MCF 10A (cell line): ENCODE measurements at regions of chr12 and their contacts with region 1.

Region 1: GRCh38 chr12:17642340-17642650 is 447.7 kb downstream of the RERGL start:
- DNase-seq: no peak
- H3K4me3 Mint-ChIP-seq: peak overlapping the region; percentile 44
- H3K27ac Mint-ChIP-seq: no peak overlapping the region
- H3K4me1 Mint-ChIP-seq: no peaks in the 10 kb centered on the region
- H3K27me3 Mint-ChIP-seq: peaks cover 44% of the 10 kb centered on the region
- CTCF ChIP-seq: no peak

Region 2: DNA sequence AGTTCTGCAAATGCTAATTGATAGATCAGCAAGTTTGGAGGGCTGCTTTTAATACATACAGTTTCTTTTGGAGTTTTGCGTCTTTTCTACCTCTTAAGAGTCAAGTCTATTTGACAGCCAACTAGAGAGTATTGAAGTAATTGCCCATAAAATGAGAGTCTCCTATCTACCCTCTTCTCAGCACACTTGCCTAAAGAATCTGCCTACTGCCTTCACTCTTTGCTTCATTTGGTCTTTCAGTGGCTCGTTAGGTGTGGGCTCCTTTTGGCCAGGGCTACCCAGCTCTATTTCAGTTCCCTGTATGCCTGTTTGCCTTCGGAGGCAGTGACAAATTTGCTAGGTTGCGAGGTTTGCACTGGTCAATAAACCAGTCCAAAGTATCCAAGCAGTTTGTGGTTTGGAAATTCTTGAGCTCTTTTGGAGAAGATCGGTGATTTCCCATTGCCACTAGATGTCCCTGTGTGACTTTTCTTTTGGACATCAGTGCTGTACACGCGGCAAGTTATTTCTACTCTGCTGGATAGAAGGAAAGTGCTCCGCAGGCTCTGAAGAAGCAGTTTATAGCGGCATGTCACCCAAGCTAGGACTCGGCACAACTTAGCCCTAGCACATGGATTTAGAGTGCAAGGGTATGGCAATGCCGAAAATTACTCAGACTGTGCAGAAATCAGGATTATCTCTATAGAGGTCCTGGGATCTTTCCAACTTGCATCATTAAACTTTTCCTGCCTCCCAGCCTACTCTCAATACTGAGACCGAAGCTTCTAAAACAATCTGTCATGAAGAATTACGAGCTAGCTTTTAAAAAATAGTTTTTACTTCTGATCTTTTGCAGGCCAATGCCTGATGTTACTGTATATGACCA is 1256.3 kb before region 1 on chr12:
- CTCF ChIA-PET with region 1: interaction called, 10 read pairs
- POLR2A ChIA-PET with region 1: no interaction called
- intact Hi-C with region 1: loop called (anchors 5 kb)
- DNase-seq: peak; percentile 34
- H3K4me3 Mint-ChIP-seq: no peak overlapping the region
- H3K27ac Mint-ChIP-seq: no peak overlapping the region
- H3K4me1 Mint-ChIP-seq: peaks cover 7% of the 10 kb centered on the region
- H3K27me3 Mint-ChIP-seq: no peaks in the 10 kb centered on the region
- CTCF ChIP-seq: peak; percentile 53

Region 3: GRCh38 chr12:17159506-17160300 is 482.6 kb before region 1 on chr12:
- CTCF ChIA-PET with region 1: no interaction called
- POLR2A ChIA-PET with region 1: no interaction called
- intact Hi-C with region 1: loop called (anchors 5 kb)
- DNase-seq: no peak
- H3K4me3 Mint-ChIP-seq: no peak overlapping the region
- H3K27ac Mint-ChIP-seq: no peak overlapping the region
- H3K4me1 Mint-ChIP-seq: no peaks in the 10 kb centered on the region
- H3K27me3 Mint-ChIP-seq: no peaks in the 10 kb centered on the region
- CTCF ChIP-seq: no peak

Region 4: GRCh38 chr12:17928708-17929366 is 286.5 kb after region 1 on chr12:
- CTCF ChIA-PET with region 1: interaction called, 5 read pairs
- POLR2A ChIA-PET with region 1: no interaction called
- intact Hi-C with region 1: loop called (anchors 1 kb)
- DNase-seq: peak; percentile 60
- H3K4me3 Mint-ChIP-seq: no peak overlapping the region
- H3K27ac Mint-ChIP-seq: no peak overlapping the region
- H3K4me1 Mint-ChIP-seq: peaks cover 7% of the 10 kb centered on the region
- H3K27me3 Mint-ChIP-seq: peaks cover 15% of the 10 kb centered on the region
- CTCF ChIP-seq: peak; percentile 55

Region 5: DNA sequence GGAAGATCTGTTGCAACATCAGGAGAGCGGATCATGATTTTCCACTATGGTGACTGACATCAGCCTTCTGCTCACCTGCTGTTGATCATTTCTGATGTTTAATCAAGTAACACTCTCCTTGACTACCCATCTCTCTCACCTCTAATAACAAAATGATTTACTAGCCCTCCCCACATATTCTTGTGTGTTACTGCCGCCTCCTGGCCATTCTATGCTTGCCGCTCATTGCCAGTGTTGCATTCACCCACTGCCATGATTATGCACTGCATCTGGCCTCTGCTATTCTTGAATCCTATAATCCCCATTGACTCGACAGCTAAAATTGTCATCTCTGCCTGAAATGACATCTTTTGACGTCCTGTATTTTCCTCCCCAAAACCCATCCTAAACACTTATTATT is 333.9 kb after region 1 on chr12:
- CTCF ChIA-PET with region 1: no interaction called
- POLR2A ChIA-PET with region 1: no interaction called
- intact Hi-C with region 1: loop called (anchors 5 kb)
- DNase-seq: peak; percentile 20
- H3K4me3 Mint-ChIP-seq: no peak overlapping the region
- H3K27ac Mint-ChIP-seq: no peak overlapping the region
- H3K4me1 Mint-ChIP-seq: no peaks in the 10 kb centered on the region
- H3K27me3 Mint-ChIP-seq: peaks cover 56% of the 10 kb centered on the region
- CTCF ChIP-seq: peak; percentile 22